ENCODE measurements at regions of chr1 and their contacts with region 1.

Region 1: GRCh38 chr1:170267316-170267715 is 121.6 kb downstream of the NTMT2 start:
- DNase-seq: no peak
- H3K4me3 Mint-ChIP-seq: no peak overlapping the region
- H3K27ac Mint-ChIP-seq: no peak overlapping the region
- H3K4me1 Mint-ChIP-seq: no peaks in the 10 kb centered on the region
- H3K27me3 Mint-ChIP-seq: no peaks in the 10 kb centered on the region
- CTCF ChIP-seq: no peak

Region 2: DNA sequence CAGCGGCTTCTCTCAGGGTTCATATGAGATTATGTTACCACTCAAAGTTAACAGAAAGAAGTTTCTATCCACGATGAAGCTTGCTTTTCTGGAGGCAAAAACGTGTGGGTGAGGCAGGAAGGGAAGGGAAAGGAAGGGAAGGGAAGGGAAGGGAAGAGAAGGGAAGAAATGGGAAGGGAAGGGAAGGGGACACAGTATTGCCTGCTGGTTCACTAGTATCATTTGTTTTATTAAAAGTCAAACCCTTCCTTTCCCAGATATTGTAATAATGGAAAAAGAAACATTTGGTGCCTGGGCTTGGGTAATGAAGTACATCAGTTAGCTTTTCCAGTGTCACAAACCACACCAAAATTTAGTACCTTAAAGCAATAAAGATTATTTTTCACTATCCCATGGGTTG is 650.1 kb after region 1 on chr1:
- CTCF ChIA-PET with region 1: interaction called, 10 read pairs
- intact Hi-C with region 1: no loop called
- DNase-seq: no peak
- H3K4me3 Mint-ChIP-seq: no peak overlapping the region
- H3K27ac Mint-ChIP-seq: no peak overlapping the region
- H3K4me1 Mint-ChIP-seq: no peaks in the 10 kb centered on the region
- H3K27me3 Mint-ChIP-seq: no peaks in the 10 kb centered on the region
- CTCF ChIP-seq: no peak

Measured in Calu3 (cell line).